ENCODE measurements at regions of chr2 and their contacts with region 1.

Region 1: GRCh38 chr2:135709992-135710391 is 31.7 kb upstream of the UBXN4 start:
- DNase-seq: peak; percentile 32 to 82 (median 72)
- H3K4me3 ChIP-seq: no peak overlapping the region
- H3K27ac ChIP-seq: no peak overlapping the region
- H3K4me1 ChIP-seq: no peaks in the 10 kb centered on the region
- H3K27me3 ChIP-seq: no peaks in the 10 kb centered on the region
- CTCF ChIP-seq: peak; percentile 78 to 86 (median 81)
- EP300 ChIP-seq: no peak
- POLR2A ChIP-seq: no peak

Region 2: DNA sequence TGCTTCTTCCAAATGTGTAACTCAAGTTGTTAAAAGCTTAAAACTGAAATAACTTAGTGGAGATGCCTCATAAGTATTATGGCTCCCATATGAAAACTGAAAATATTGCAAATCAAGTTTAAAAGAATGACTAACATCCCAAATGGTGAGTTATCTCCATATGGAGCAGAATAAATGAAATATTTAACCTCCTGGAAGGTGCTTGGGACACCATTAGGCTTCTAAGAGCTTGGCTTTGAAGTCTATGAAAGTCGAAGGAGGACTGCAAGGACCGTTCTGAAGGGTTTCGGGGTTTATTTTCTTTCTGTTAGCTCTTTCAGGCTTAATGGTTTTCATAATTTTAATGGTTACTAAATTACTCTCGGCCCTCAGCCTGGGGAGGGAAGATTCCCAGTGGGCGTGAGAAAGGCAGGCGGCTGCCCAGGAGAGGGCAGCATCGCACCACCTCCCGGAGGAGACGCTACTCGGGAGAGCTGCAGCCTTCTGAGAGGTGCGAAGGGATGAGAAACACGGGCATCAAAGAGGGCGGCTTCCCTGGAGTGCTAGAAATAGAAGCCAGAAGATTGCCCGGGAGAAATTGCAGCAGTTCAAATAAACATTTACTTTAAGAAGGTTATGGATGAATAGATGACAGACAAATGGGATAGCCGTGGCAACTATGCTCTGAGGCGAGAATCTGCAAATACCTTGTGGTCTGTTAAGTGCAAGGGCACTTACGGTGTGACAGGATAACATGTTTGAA is 705.8 kb before region 1 on chr2:
- intact Hi-C with region 1: loop called (anchors 5 to 10 kb)
- DNase-seq: peak; percentile 68 to 82 (median 78)
- H3K4me3 ChIP-seq: no peak overlapping the region
- H3K27ac ChIP-seq: no peak overlapping the region
- H3K4me1 ChIP-seq: peaks cover 2% of the 10 kb centered on the region
- H3K27me3 ChIP-seq: no peaks in the 10 kb centered on the region
- CTCF ChIP-seq: peak; percentile 41 to 79 (median 54)
- EP300 ChIP-seq: no peak
- POLR2A ChIP-seq: no peak